Psoas muscle (tissue), 8 donors: ENCODE measurements at regions of chr11 and their contacts with region 1.

Region 1: GRCh38 chr11:16738193-16738946 is at the start of gene C11orf58:
- DNase-seq: peak; percentile 96 to 97
- ATAC-seq: peak; percentile 95 to 98 (median 98)
- H3K4me3 ChIP-seq: peak within 1 kb of the TSS; percentile 93
- H3K27ac ChIP-seq: peak within 1 kb of the TSS; percentile 93
- H3K4me1 ChIP-seq: peaks cover 36% of the 10 kb centered on the region
- H3K27me3 ChIP-seq: no peaks in the 10 kb centered on the region
- CTCF ChIP-seq: no peak
- total RNA-seq, gene C11orf58: 82.6 to 150 (median 102) TPM

Region 2: DNA sequence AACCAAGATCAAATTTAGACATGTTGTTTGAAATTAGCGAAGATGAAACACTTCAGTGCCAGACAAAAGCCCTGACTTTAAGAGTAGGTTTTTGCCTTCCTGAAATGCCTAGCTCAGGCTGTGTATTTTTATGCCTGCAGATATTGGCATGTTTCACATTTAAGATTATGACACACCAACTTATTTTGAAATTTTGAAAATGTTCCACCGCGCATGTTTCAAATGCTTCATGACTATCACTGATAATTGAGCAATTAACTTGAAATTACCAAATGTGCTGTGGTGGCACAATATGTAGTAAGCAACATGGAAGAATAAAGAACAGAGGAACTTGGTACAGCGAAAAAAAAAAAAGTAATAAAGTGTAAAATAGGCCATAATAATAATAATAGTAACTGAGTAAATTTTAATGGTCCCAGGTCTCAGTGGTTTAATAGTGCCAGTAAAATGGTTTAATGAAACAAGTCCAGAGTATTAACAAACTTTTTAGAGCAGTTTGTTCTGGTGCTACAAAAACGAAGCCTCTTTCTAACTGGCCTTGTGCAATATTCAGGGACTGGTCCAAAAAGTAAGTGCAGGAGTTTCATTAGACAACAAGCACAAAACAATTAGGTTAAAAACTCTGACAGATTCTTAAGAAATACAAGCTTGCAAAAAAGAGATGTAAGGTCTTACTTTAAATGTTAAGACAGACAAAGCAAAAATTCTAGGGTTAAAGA is 269.5 kb before region 1 on chr11:
- intact Hi-C with region 1: no loop called
- DNase-seq: no peak
- ATAC-seq: peak; percentile 38 to 86 (median 60)
- H3K4me3 ChIP-seq: peak overlapping the region; percentile 8
- H3K27ac ChIP-seq: peak overlapping the region; percentile 57
- H3K4me1 ChIP-seq: peaks cover 36% of the 10 kb centered on the region
- H3K27me3 ChIP-seq: no peaks in the 10 kb centered on the region
- CTCF ChIP-seq: no peak

Region 3: DNA sequence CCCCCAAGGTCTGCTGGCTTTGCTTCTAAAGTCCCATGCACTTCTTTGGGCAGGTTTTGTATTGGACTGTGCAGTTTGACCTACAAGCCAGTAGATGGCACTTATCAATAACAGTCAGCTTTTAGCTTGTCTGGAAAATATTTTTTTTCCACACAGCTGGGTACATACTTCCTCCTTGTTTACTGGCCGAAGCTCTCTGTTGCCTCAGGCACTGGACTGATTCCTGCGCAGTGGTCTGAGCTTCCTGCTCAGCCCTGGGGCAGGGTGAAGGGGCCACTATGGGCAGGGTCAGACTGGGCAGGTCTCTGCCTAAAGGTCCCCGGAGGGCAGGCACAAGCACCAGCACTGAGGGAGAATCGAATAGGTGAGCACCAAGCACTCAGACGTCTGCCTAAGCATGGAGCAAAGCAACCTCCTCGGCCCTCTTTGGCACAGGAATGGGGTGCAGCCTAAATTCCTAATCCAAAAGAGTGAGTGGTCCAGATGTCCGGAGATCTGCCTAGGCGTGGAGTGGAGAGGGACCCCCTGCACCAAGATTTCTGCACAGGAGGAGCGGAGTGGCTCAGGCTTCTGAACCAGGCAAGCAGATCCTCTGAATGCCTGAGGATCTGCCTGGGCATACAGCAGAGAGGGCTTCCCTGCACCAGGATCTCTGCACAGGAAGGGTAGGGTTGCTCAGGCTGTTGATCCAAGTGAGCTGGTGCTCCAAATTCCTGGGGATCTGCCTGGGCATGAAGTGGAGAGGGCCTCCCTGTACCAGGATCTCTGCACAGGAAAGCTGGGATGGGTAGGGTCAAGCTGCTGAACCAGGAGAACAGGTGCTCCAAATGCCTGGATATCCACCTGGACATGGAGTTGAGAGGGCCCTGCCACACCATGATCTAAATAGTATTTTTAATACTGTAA is 105.8 kb before region 1 on chr11:
- intact Hi-C with region 1: no loop called
- DNase-seq: no peak
- ATAC-seq: no peak
- H3K4me3 ChIP-seq: no peak overlapping the region
- H3K27ac ChIP-seq: no peak overlapping the region
- H3K4me1 ChIP-seq: no peaks in the 10 kb centered on the region
- H3K27me3 ChIP-seq: no peaks in the 10 kb centered on the region
- CTCF ChIP-seq: no peak

Region 4: GRCh38 chr11:18321980-18322711 is 1583.8 kb after region 1 on chr11 and contains the starts of genes GTF2H1 and HPS5:
- intact Hi-C with region 1: loop called in 1 of 2 experiments (anchors 10 kb)
- DNase-seq: peak; percentile 94 to 97
- ATAC-seq: peak; percentile 98 to 99 (median 99)
- H3K4me3 ChIP-seq: peak within 1 kb of the TSS; percentile 83
- H3K27ac ChIP-seq: peak within 1 kb of the TSS; percentile 95
- H3K4me1 ChIP-seq: peaks cover 34% of the 10 kb centered on the region
- H3K27me3 ChIP-seq: no peaks in the 10 kb centered on the region
- CTCF ChIP-seq: no peak
- total RNA-seq, gene GTF2H1: 14.5 to 25.2 (median 19.4) TPM
- total RNA-seq, gene HPS5: 7.0 to 11.9 (median 8.8) TPM